ENCODE measurements at regions of chr3 and their contacts with region 1.

Region 1: GRCh38 chr3:10263646-10264363 is 15.5 kb downstream of the TATDN2 start:
- DNase-seq: peak; percentile 27 to 60 (median 56)
- H3K4me3 ChIP-seq: no peak overlapping the region
- H3K27ac ChIP-seq: no peak overlapping the region
- H3K4me1 ChIP-seq: peaks cover 0 to 8% (median 1%) of the 10 kb centered on the region in 4 experiments
- H3K27me3 ChIP-seq: no peaks in the 10 kb centered on the region

Region 2: DNA sequence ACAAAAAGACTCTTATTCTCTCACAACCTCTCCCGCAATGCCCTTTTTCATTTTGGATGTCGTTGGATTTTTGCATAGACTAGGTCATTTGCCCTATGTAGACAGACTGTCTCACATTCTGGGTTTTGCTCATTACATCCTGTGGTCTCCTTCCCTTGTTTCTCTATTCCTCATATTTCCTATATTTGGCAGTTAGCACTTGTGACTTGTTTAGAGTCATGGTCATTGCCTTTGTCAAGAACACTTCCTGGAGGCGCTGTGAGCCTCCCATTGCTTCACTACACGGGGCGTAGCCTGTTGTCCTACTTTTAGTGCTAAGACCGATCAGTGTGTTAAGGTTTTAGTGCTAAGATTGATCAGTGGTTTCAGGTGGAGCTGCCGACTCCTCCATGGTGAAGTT is 31.7 kb before region 1 on chr3:
- CTCF ChIA-PET with region 1: no interaction called
- POLR2A ChIA-PET with region 1: no interaction called
- DNase-seq: no peak
- H3K4me3 ChIP-seq: no peak overlapping the region
- H3K27ac ChIP-seq: no peak overlapping the region
- H3K4me1 ChIP-seq: peaks cover 8 to 25% (median 17%) of the 10 kb centered on the region in 4 experiments
- H3K27me3 ChIP-seq: no peaks in the 10 kb centered on the region

Region 3: GRCh38 chr3:10253731-10254130 is 10.1 kb before region 1 on chr3:
- CTCF ChIA-PET with region 1: interaction called, 19 read pairs
- POLR2A ChIA-PET with region 1: no interaction called
- DNase-seq: no peak
- H3K4me3 ChIP-seq: no peak overlapping the region
- H3K27ac ChIP-seq: peak overlapping the region in 1 of 2 experiments; percentile 6
- H3K4me1 ChIP-seq: peaks cover 4 to 25% (median 21%) of the 10 kb centered on the region in 4 experiments
- H3K27me3 ChIP-seq: no peaks in the 10 kb centered on the region

Region 4: DNA sequence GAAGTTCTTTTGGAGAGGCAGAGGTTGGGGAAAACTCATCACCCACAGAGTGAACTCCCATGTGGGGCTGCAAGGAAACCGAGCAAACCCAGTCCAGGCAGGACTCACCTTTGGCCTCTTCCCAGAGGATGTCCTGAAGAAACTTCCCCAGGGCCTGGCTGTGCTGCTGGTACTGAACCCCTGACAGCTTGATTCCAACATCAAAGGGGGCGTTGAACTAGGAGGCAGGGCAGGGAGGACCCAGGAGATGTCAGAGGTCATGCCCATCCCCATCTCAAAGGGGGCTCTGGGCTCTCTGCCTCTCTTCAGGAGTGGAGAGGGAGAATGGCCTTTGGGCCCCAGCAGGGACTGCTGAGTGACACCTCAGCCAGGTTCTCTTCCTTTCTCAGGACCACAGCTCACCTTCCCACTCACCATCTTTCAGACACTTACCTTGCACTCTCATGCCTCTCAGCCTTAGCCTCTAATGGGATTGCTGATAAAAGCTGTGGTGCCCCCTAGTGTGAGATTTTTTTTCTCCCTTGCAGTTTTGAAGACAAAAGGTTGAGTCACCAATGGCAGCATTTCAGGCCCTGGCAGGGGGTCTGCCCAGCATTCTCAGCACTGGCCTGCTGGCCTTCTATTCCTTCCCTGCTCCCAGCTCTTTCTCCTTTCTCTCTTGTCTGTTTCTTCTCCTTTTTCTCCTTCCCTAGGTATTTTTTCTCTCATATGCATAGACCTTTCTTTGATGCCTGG is 23.0 kb after region 1 on chr3:
- CTCF ChIA-PET with region 1: interaction called, 19 read pairs
- POLR2A ChIA-PET with region 1: interaction called, 4 read pairs
- DNase-seq: peak in 2 of 3 donors; percentile 69 to 85
- H3K4me3 ChIP-seq: no peak overlapping the region
- H3K27ac ChIP-seq: no peak overlapping the region
- H3K4me1 ChIP-seq: peaks cover 0 to 36% (median 17%) of the 10 kb centered on the region in 4 experiments
- H3K27me3 ChIP-seq: no peaks in the 10 kb centered on the region

Measured in common myeloid progenitor, CD34-positive (primary cell).